ENCODE measurements at regions of chr4 and their contacts with region 1.

Region 1: DNA sequence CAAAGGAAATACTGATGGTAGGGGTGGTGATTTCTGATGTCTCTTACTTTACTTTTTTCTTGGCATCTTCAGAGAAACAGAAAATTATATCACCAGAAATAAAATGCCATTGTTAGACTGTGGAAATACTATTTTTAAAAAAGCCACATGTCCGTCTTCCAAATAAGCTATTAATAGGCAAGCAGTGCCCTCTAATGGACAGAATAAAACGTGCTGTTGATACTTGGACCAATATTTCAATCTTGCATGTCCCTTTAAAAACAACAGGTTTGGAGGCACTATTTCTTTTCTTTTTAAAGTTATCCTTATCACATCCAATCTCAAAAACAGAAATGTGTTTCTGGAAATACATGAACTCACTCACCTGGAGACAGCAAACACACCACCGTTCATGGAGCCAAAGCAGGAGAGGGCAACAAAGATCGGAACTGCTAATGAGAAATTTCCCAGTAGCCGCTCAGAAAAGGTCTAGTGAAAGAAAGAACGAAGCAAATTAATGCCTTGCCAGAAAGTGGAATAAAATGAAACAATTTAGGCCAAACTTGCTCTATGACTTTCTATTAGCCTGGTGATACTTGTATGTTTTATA is 59.2 kb downstream of the SLC7A11 start:
- DNase-seq: no peak

Region 2: GRCh38 chr4:138035781-138036258 is 147.1 kb before region 1 on chr4:
- intact Hi-C with region 1: loop called in 1 of 2 experiments (anchors 10 kb)
- DNase-seq: peak; percentile 25

Region 3: GRCh38 chr4:138204507-138204906 is 21.6 kb after region 1 on chr4:
- intact Hi-C with region 1: no loop called
- DNase-seq: no peak

Region 4: GRCh38 chr4:138680989-138681604 is 498.2 kb after region 1 on chr4:
- intact Hi-C with region 1: loop called in 1 of 2 experiments (anchors 10 kb)
- DNase-seq: peak; percentile 92

Measured in posterior vena cava (tissue), 2 donors.